Activated naive CD4-positive, alpha-beta T cell treated with anti-CD3 and anti-CD28 coated beads for 36 hours (primary cell): ENCODE measurements at regions of chr5 and their contacts with region 1.

Region 1: DNA sequence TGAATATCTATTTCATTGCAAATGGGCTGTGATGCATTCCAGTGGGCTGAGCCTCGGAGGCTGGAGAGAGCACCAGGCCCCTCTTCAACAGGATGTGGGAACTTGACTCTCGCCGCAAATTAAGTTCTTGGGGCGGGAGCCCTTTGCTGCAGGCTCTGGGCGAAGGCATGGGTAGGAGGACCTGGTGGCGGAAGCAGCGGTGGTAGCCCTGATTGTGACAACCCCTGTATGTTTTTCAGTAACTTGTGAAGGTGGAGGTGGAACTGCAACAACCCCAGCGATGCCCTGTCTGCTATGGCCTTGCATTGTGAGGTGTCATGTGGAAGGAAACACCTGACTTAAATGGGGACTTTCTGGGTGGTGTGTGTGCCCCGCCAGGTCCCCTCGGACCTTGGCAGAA is 9.4 kb downstream of the FYB1 start:
- DNase-seq: peak; percentile 83
- H3K4me3 Mint-ChIP-seq: peak overlapping the region; percentile 80
- H3K27ac Mint-ChIP-seq: peak overlapping the region; percentile 99
- H3K4me1 Mint-ChIP-seq: peaks cover 78% of the 10 kb centered on the region
- H3K27me3 Mint-ChIP-seq: no peaks in the 10 kb centered on the region

Region 2: GRCh38 chr5:39164529-39165402 is 45.2 kb before region 1 on chr5:
- CTCF ChIA-PET with region 1: interaction called, 3 read pairs
- intact Hi-C with region 1: loop called (anchors 1 kb)
- DNase-seq: peak; percentile 51
- H3K4me3 Mint-ChIP-seq: peak overlapping the region; percentile 74
- H3K27ac Mint-ChIP-seq: peak overlapping the region; percentile 96
- H3K4me1 Mint-ChIP-seq: peaks cover 86% of the 10 kb centered on the region
- H3K27me3 Mint-ChIP-seq: no peaks in the 10 kb centered on the region

Region 3: GRCh38 chr5:39194466-39195136 is 15.3 kb before region 1 on chr5:
- CTCF ChIA-PET with region 1: interaction called, 42 read pairs
- intact Hi-C with region 1: loop called (anchors 1 kb)
- DNase-seq: no peak
- H3K4me3 Mint-ChIP-seq: peak overlapping the region; percentile 76
- H3K27ac Mint-ChIP-seq: peak overlapping the region; percentile 93
- H3K4me1 Mint-ChIP-seq: peaks cover 62% of the 10 kb centered on the region
- H3K27me3 Mint-ChIP-seq: no peaks in the 10 kb centered on the region

Region 4: DNA sequence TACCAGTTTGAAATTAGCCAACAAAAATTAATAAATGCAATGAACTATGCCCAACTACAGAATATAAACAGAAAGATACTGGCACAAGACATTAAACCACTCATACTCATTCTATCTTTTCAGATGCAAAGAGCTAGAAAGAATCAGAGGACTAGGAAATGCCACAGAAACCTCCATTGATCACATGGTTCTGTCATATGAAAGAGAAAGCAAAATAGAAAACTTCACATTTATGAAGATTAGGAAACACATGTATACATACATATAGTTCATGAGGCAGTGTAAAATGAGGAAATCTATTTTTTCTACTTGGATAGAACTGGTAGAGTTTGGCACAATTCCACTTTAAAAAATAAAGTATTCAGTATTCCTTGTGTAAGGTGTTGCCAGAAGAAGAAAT is 1194.7 kb after region 1 on chr5:
- CTCF ChIA-PET with region 1: no interaction called
- intact Hi-C with region 1: loop called (anchors 5 kb)
- DNase-seq: no peak
- H3K4me3 Mint-ChIP-seq: peak overlapping the region; percentile 33
- H3K27ac Mint-ChIP-seq: peak overlapping the region; percentile 99
- H3K4me1 Mint-ChIP-seq: peaks cover 89% of the 10 kb centered on the region
- H3K27me3 Mint-ChIP-seq: no peaks in the 10 kb centered on the region